Activated T-helper 1 cell treated with anti-CD3 and anti-CD28 coated beads, Interleukin-12 subunit alpha, Interleukin-12 subunit beta, Interleukin-2, Interleukin-4 antibody, amounts not matched to agents 30 ng/mL and 10 ng/mL and 1 ng/mL, durations not matched to agents 14 hours and 24 hours and 36 hours (primary cell): ENCODE measurements at regions of chr4 and their contacts with region 1.

Region 1: DNA sequence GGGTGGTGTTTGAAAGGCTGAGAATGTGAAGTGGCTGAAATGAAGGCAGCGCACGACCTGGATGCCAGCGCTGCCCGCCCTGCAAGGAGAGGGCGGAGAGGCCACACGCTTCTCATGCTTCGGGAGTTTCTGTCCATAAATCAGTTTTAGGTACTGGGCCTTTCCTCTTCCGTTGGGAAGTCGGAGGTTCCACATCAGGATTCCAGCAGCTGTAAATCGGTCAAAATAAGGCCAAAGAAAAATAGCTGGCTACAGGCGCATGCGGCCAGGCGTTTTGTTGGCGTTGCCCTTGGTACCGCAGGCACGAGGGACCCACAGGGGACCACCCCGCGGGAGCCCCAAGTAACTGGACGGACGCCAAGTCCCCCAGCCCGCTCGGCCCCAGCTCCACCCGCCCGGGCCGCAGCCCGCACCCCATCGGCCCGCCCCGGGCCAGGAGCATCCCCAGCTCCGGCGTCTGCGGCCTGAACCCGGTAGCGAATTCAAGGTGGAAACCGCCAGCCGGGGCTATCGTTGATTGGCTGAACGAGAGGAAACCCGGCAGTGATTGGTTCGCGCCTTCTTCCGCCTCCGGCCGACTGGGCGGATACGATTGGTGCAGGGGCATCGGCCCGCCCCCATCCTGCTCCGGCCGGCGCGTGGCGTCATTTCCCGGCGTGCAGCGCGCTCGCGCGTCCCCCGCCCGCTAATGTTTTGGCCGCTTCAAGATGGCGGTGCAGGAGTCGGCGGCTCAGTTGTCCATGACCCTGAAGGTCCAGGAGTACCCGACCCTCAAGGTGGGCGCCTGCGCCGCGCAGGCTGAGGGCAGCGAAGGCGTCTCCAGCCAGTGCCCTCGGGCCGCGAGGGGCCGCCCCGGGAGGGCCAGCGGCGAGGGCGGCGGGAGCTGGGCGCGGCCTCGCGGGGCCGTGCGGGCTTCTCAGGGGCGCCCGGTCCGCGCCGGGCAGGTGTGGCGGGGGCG is at the start of gene MAEA:
- DNase-seq: peak; percentile 98
- H3K4me3 Mint-ChIP-seq: peak within 1 kb of the TSS; percentile 97
- H3K27ac Mint-ChIP-seq: peak within 1 kb of the TSS; percentile 88
- H3K4me1 Mint-ChIP-seq: peaks cover 32% of the 10 kb centered on the region
- H3K27me3 Mint-ChIP-seq: peaks cover 2% of the 10 kb centered on the region
- total RNA-seq, gene MAEA: 67.1 and 68.1 TPM in 2 replicates

Region 2: GRCh38 chr4:1011022-1011694 is 278.3 kb before region 1 on chr4 and contains the start of gene FGFRL1:
- intact Hi-C with region 1: loop called (anchors 5 kb)
- DNase-seq: peak; percentile 89
- H3K4me3 Mint-ChIP-seq: peak within 1 kb of the TSS; percentile 86
- H3K27ac Mint-ChIP-seq: peak within 1 kb of the TSS; percentile 89
- H3K4me1 Mint-ChIP-seq: peaks cover 15% of the 10 kb centered on the region
- H3K27me3 Mint-ChIP-seq: peaks cover 28% of the 10 kb centered on the region
- total RNA-seq, gene FGFRL1: 15.5 TPM in 2 replicates

Region 3: DNA sequence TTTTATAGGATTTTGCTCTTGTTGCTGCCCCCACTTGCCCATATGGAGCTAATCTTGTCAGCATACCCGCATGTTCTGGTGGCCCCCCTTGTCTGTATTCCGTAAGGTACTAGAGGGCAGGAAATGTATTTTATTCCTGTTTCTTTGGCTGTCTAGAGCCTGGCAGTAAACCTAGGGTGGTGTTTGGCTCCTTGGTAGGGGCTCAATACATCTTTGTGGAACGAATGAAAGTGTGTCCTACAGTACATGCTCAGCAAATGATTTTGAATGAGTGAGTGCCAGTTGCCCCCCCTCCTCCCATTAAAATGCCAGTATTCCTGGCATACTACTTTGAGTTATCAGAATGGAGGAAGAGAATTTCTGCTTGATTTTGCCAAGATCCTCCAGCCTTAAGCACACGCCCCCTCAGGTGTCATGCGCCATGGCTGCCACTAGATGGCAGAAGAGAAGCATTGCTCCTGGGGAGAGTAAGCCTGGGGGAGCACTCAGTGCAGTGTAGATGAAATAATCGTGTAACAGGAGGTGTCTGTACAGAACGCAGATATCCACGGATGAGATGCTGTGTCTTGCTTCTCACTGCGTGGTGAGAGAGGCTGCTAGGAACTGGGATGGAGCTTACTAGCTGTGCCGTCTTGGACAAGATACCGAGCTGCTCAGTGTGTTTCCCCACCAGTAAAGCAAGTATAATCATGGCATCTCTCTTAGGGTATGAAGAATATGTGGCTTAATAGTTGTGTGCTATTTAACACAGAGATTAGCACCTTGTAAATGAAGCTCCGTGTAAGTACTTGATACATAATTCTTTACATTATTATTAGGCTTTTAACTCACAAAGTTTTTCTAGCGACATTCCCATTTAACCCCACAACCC is 158.9 kb before region 1 on chr4:
- intact Hi-C with region 1: loop called (anchors 1 kb)
- DNase-seq: peak; percentile 70
- H3K4me3 Mint-ChIP-seq: no peak overlapping the region
- H3K27ac Mint-ChIP-seq: no peak overlapping the region
- H3K4me1 Mint-ChIP-seq: peaks cover 5% of the 10 kb centered on the region
- H3K27me3 Mint-ChIP-seq: peaks cover 14% of the 10 kb centered on the region

Region 4: GRCh38 chr4:1200425-1201035 is 89.0 kb before region 1 on chr4:
- intact Hi-C with region 1: loop called (anchors 1 kb)
- DNase-seq: no peak
- H3K4me3 Mint-ChIP-seq: peak overlapping the region; percentile 75
- H3K27ac Mint-ChIP-seq: peak overlapping the region; percentile 100
- H3K4me1 Mint-ChIP-seq: peaks cover 41% of the 10 kb centered on the region
- H3K27me3 Mint-ChIP-seq: no peaks in the 10 kb centered on the region

Region 5: DNA sequence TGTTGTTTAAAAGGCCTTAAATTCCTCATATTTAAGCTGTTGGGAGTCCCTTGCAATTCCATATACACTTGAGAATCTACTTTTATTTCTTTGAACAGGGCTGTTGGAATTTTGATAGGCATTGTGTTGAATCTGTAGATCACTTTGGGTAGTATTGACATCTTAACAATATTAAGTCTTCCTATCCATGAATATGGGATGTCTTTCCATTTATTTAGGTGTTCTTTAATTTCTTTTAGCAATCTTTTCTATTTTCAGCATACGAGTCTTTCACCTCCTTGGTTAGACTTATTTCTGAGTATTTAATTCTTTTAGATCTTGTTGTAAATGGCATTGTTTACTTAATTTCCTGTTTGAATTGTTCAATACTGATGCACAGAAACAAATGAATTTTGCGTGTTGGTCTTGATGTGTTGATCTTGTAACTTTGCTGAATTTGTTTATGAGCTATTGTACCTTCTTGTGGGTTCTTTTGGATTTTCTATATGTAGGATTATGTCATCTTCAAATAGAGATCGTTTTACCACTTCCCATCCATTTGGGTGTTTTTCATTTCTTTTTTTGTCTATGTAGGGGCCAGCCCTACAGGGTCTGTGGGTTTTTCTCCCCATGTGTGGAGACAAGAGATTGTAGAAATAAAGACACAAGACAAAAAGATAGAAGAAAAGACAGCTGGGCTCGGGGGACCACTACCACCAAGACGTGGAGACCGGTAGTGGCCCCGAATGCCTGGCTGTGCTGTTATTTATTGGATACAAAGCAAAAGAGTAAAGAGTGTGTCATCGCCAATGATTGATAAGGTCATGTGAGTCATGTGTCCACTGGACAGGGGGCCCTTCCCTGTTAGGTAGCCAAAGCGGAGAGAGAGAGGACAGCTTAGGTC is 22.4 kb before region 1 on chr4:
- intact Hi-C with region 1: loop called (anchors 1 kb)
- DNase-seq: no peak
- H3K4me3 Mint-ChIP-seq: peak overlapping the region; percentile 76
- H3K27ac Mint-ChIP-seq: peak overlapping the region; percentile 95
- H3K4me1 Mint-ChIP-seq: peaks cover 29% of the 10 kb centered on the region
- H3K27me3 Mint-ChIP-seq: no peaks in the 10 kb centered on the region

Region 6: GRCh38 chr4:1309261-1310010 is 19.9 kb after region 1 on chr4:
- intact Hi-C with region 1: no loop called
- DNase-seq: peak; percentile 41
- H3K4me3 Mint-ChIP-seq: peak overlapping the region; percentile 49
- H3K27ac Mint-ChIP-seq: peak overlapping the region; percentile 36
- H3K4me1 Mint-ChIP-seq: peaks cover 52% of the 10 kb centered on the region
- H3K27me3 Mint-ChIP-seq: no peaks in the 10 kb centered on the region

Region 7: GRCh38 chr4:1351854-1352633 is 62.6 kb after region 1 on chr4:
- intact Hi-C with region 1: loop called (anchors 1 kb)
- DNase-seq: peak; percentile 84
- H3K4me3 Mint-ChIP-seq: no peak overlapping the region
- H3K27ac Mint-ChIP-seq: peak overlapping the region; percentile 70
- H3K4me1 Mint-ChIP-seq: peaks cover 20% of the 10 kb centered on the region
- H3K27me3 Mint-ChIP-seq: no peaks in the 10 kb centered on the region